ENCODE measurements at regions of chr2 and their contacts with region 1.

Region 1: GRCh38 chr2:127810619-127811396 is at the start of gene WDR33:
- DNase-seq: peak; percentile 87 to 98 (median 95)
- ATAC-seq: peak; percentile 95
- H3K4me3 ChIP-seq: peak within 1 kb of the TSS; percentile 88 to 92
- H3K4me3 Mint-ChIP-seq: peak within 1 kb of the TSS; percentile 92
- H3K27ac ChIP-seq: peak within 1 kb of the TSS; percentile 95 to 98
- H3K27ac Mint-ChIP-seq: peak within 1 kb of the TSS; percentile 98
- H3K4me1 ChIP-seq: peaks cover 42% of the 10 kb centered on the region
- H3K4me1 Mint-ChIP-seq: peaks cover 51% of the 10 kb centered on the region
- H3K27me3 ChIP-seq: no peaks in the 10 kb centered on the region
- H3K27me3 Mint-ChIP-seq: no peaks in the 10 kb centered on the region
- CTCF ChIP-seq: no peak
- total RNA-seq, gene WDR33: 60.3 to 61.0 TPM

Region 2: DNA sequence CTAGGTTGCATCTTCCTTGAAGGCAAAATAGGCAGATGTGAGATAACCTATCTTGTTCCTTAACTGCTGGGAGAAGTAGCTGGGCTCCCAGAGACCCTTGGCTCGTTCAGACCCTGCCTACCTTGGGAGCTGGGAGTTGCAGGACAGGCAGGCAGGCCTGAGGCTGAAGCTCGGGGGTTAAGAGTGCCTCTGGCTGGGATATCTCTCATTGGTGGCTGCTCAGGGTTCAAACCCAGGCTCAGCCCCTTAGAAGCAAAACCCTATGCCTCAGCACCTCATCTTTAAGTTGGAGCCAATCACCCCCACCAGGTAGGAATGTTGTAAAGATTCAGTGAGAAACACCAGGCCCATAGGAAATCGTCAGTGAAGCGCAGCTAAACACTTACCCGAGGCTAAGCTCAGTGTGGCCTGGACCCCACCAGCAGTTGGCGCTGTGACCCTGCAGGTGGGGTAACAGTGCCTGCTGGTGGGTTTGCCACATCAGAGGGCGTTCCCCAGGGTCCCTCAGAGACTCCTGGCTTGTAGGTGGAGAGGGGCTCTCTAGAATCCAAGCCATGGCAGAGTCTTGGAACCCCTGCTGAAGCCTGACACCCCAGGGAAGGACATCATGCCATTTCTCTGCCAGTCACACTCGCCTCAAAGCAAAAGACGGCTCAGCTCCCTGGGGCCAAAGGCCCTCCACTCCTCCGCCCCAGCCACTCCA is 219.4 kb before region 1 on chr2:
- CTCF ChIA-PET with region 1: no interaction called
- POLR2A ChIA-PET with region 1: no interaction called
- intact Hi-C with region 1: loop called in 1 of 2 experiments (anchors 5 kb)
- DNase-seq: peak; percentile 30 to 79 (median 66)
- ATAC-seq: peak; percentile 98
- H3K4me3 ChIP-seq: no peak overlapping the region
- H3K4me3 Mint-ChIP-seq: no peak overlapping the region
- H3K27ac ChIP-seq: no peak overlapping the region
- H3K27ac Mint-ChIP-seq: no peak overlapping the region
- H3K4me1 ChIP-seq: no peaks in the 10 kb centered on the region
- H3K4me1 Mint-ChIP-seq: peaks cover 4% of the 10 kb centered on the region
- H3K27me3 ChIP-seq: no peaks in the 10 kb centered on the region
- H3K27me3 Mint-ChIP-seq: no peaks in the 10 kb centered on the region
- CTCF ChIP-seq: peak; percentile 66

Region 3: GRCh38 chr2:127829845-127830246 is 19.0 kb after region 1 on chr2:
- CTCF ChIA-PET with region 1: no interaction called
- POLR2A ChIA-PET with region 1: interaction called, 5 read pairs
- intact Hi-C with region 1: loop called (anchors 1 to 2 kb)
- DNase-seq: peak; percentile 15 to 91 (median 54)
- ATAC-seq: peak; percentile 97
- H3K4me3 ChIP-seq: no peak overlapping the region
- H3K4me3 Mint-ChIP-seq: peak overlapping the region; percentile 29
- H3K27ac ChIP-seq: peak overlapping the region; percentile 31 to 75
- H3K27ac Mint-ChIP-seq: peak overlapping the region; percentile 81
- H3K4me1 ChIP-seq: peaks cover 21% of the 10 kb centered on the region
- H3K4me1 Mint-ChIP-seq: peaks cover 21% of the 10 kb centered on the region
- H3K27me3 ChIP-seq: no peaks in the 10 kb centered on the region
- H3K27me3 Mint-ChIP-seq: no peaks in the 10 kb centered on the region
- CTCF ChIP-seq: no peak

Region 4: DNA sequence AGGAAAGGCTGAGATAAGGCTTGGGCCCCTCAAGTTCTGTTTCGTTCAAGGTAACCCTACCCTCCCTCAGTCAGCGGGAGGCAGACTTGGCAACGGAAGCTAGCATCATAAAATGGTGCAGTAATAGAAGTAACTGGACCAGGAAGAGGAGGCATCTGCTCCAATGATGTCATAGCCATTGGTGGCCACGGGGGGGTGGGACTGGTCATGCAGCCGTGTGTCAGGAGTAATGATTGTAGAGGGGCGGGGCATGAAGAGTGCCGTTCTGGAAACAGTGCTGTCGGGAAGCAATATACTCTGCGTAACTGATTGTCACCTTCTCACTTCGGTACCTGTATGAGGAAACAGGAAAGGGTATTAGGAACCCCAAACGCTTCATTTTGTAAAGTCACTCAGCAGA is 54.1 kb after region 1 on chr2:
- CTCF ChIA-PET with region 1: no interaction called
- POLR2A ChIA-PET with region 1: no interaction called
- intact Hi-C with region 1: no loop called
- DNase-seq: no peak
- ATAC-seq: no peak
- H3K4me3 ChIP-seq: no peak overlapping the region
- H3K4me3 Mint-ChIP-seq: no peak overlapping the region
- H3K27ac ChIP-seq: no peak overlapping the region
- H3K27ac Mint-ChIP-seq: no peak overlapping the region
- H3K4me1 ChIP-seq: peaks cover 3% of the 10 kb centered on the region
- H3K4me1 Mint-ChIP-seq: peaks cover 2% of the 10 kb centered on the region
- H3K27me3 ChIP-seq: no peaks in the 10 kb centered on the region
- H3K27me3 Mint-ChIP-seq: no peaks in the 10 kb centered on the region
- CTCF ChIP-seq: no peak

Region 5: GRCh38 chr2:127884436-127885345 is 73.9 kb after region 1 on chr2:
- CTCF ChIA-PET with region 1: no interaction called
- POLR2A ChIA-PET with region 1: no interaction called
- intact Hi-C with region 1: loop called in 1 of 2 experiments (anchors 2 kb)
- DNase-seq: peak in 1 of 9 experiments; percentile 9
- ATAC-seq: no peak
- H3K4me3 ChIP-seq: peak overlapping the region; percentile 38
- H3K4me3 Mint-ChIP-seq: peak overlapping the region; percentile 86
- H3K27ac ChIP-seq: no peak overlapping the region
- H3K27ac Mint-ChIP-seq: peak overlapping the region; percentile 87
- H3K4me1 ChIP-seq: peaks cover 22% of the 10 kb centered on the region
- H3K4me1 Mint-ChIP-seq: peaks cover 66% of the 10 kb centered on the region
- H3K27me3 ChIP-seq: no peaks in the 10 kb centered on the region
- H3K27me3 Mint-ChIP-seq: no peaks in the 10 kb centered on the region
- CTCF ChIP-seq: no peak

Region 6: DNA sequence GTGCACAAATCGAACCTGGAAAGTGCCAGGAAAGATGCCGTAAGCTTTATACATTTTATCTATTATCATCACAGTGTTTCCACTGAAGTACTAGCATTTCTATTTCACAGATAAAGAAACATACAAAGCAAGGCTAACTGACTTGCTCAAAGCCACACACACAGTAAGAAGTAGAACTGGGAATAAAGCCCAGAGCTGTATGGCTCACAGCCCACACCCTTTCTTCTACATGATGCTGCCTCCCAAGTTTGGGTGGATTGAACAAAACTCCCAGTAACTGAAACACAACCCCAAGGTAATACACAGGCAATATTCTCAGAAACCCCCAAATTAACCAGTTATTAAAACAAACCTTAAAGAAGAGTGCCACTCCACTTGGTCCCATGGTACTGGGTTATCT is 205.8 kb after region 1 on chr2:
- CTCF ChIA-PET with region 1: no interaction called
- POLR2A ChIA-PET with region 1: no interaction called
- intact Hi-C with region 1: no loop called
- DNase-seq: no peak
- ATAC-seq: no peak
- H3K4me3 ChIP-seq: no peak overlapping the region
- H3K4me3 Mint-ChIP-seq: no peak overlapping the region
- H3K27ac ChIP-seq: no peak overlapping the region
- H3K27ac Mint-ChIP-seq: no peak overlapping the region
- H3K4me1 ChIP-seq: no peaks in the 10 kb centered on the region
- H3K4me1 Mint-ChIP-seq: peaks cover 2% of the 10 kb centered on the region
- H3K27me3 ChIP-seq: no peaks in the 10 kb centered on the region
- H3K27me3 Mint-ChIP-seq: no peaks in the 10 kb centered on the region
- CTCF ChIP-seq: no peak

Region 7: GRCh38 chr2:129129096-129129495 is 1318.3 kb after region 1 on chr2:
- CTCF ChIA-PET with region 1: no interaction called
- POLR2A ChIA-PET with region 1: no interaction called
- intact Hi-C with region 1: no loop called
- DNase-seq: no peak
- ATAC-seq: no peak
- H3K4me3 ChIP-seq: no peak overlapping the region
- H3K4me3 Mint-ChIP-seq: no peak overlapping the region
- H3K27ac ChIP-seq: no peak overlapping the region
- H3K27ac Mint-ChIP-seq: no peak overlapping the region
- H3K4me1 ChIP-seq: no peaks in the 10 kb centered on the region
- H3K4me1 Mint-ChIP-seq: no peaks in the 10 kb centered on the region
- H3K27me3 ChIP-seq: no peaks in the 10 kb centered on the region
- H3K27me3 Mint-ChIP-seq: no peaks in the 10 kb centered on the region
- CTCF ChIP-seq: no peak

Measured in CD8-positive, alpha-beta T cell (primary cell).